Vagina (tissue), 2 donors: ENCODE measurements at regions of chr2 and their contacts with region 1.

Region 1: DNA sequence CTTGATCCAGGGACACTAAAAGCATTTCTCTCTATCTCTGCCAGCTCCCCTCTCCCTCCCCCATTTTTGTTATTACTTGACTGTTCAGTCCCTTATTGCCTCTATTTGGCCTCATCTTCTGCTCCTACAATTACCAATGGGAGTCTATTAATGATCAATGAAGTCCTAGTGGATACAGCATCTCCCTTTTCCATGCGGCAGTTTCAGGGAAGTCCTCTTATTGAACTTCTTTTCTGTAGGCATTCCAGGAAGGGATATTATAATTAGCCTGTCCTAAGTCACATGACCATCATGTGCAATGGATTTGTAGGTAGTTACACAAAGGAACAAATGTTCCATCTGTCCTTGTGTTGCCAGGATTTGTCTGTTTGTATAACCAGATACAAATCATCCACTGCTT is 495.1 kb upstream of the CNTNAP5 start:
- DNase-seq: no peak
- H3K4me3 ChIP-seq: no peak overlapping the region
- H3K27ac ChIP-seq: no peak overlapping the region
- H3K4me1 ChIP-seq: no peaks in the 10 kb centered on the region
- H3K27me3 ChIP-seq: no peaks in the 10 kb centered on the region
- CTCF ChIP-seq: no peak
- POLR2A ChIP-seq: no peak

Region 2: DNA sequence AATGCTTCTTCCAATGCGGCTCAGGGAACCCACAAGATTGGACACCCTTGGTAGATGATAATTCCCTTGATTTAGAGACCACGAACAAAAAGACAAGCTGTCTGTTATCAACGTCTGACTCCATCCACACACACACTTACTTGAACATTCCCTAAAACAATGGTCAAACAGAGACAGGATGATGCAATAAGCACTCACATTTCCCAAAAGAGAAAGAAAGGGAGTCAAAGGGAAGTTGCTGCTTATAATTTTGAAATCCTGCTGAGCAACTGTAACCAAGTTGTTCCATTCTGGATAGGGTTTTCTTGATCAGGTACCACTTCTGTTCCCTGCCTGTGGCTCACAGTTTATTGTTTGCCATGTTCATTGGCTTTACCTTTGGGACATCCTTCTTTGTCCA is 76.2 kb before region 1 on chr2:
- intact Hi-C with region 1: loop called (anchors 2 kb)
- DNase-seq: no peak
- H3K4me3 ChIP-seq: no peak overlapping the region
- H3K27ac ChIP-seq: no peak overlapping the region
- H3K4me1 ChIP-seq: no peaks in the 10 kb centered on the region
- H3K27me3 ChIP-seq: no peaks in the 10 kb centered on the region
- CTCF ChIP-seq: no peak
- POLR2A ChIP-seq: no peak